Activated CD4-positive, alpha-beta memory T cell treated with anti-CD3 and anti-CD28 coated beads for 36 hours (primary cell): ENCODE measurements at regions of chr18 and their contacts with region 1.

Region 1: DNA sequence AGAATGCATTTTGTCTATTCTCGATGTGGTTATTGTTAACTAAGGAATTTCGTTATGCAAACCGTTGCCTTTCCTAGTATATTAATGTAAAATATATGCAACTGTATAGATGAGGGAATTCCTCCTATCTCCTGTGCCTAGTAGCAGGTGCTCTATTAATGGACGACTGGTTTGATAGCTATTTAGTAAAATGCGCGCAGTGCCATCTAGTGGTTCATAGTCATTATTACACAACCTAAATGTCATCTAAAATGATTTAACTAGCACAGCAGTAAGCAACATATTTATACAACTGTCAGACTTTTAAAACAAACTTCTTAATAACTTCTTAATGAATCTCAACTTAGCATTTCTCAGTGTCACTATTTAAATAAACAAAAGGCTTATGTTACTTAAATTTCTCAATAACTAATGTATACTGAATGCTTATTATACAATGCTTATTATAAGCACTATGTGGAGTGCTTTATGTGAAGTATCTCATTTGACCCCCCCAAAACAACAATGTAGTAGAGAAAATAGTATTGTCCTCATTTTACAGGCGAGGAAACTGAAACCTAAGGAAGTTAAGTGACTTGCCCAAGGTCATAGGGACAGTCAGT is 77.9 kb downstream of the DTNA start:
- DNase-seq: no peak
- H3K4me3 Mint-ChIP-seq: no peak overlapping the region
- H3K27ac Mint-ChIP-seq: no peak overlapping the region
- H3K4me1 Mint-ChIP-seq: peaks cover 6% of the 10 kb centered on the region
- H3K27me3 Mint-ChIP-seq: peaks cover 11% of the 10 kb centered on the region

Region 2: GRCh38 chr18:34122724-34123334 is 665.2 kb before region 1 on chr18:
- CTCF ChIA-PET with region 1: interaction called, 15 read pairs
- POLR2A ChIA-PET with region 1: no interaction called
- intact Hi-C with region 1: loop called (anchors 1 kb)
- DNase-seq: no peak
- H3K4me3 Mint-ChIP-seq: no peak overlapping the region
- H3K27ac Mint-ChIP-seq: no peak overlapping the region
- H3K4me1 Mint-ChIP-seq: no peaks in the 10 kb centered on the region
- H3K27me3 Mint-ChIP-seq: no peaks in the 10 kb centered on the region

Region 3: GRCh38 chr18:34718610-34719009 is 69.4 kb before region 1 on chr18:
- CTCF ChIA-PET with region 1: no interaction called
- POLR2A ChIA-PET with region 1: no interaction called
- intact Hi-C with region 1: no loop called
- DNase-seq: no peak
- H3K4me3 Mint-ChIP-seq: no peak overlapping the region
- H3K27ac Mint-ChIP-seq: no peak overlapping the region
- H3K4me1 Mint-ChIP-seq: no peaks in the 10 kb centered on the region
- H3K27me3 Mint-ChIP-seq: no peaks in the 10 kb centered on the region

Region 4: GRCh38 chr18:34729264-34729663 is 58.8 kb before region 1 on chr18:
- CTCF ChIA-PET with region 1: no interaction called
- POLR2A ChIA-PET with region 1: no interaction called
- intact Hi-C with region 1: loop called (anchors 1 kb)
- DNase-seq: no peak
- H3K4me3 Mint-ChIP-seq: no peak overlapping the region
- H3K27ac Mint-ChIP-seq: no peak overlapping the region
- H3K4me1 Mint-ChIP-seq: no peaks in the 10 kb centered on the region
- H3K27me3 Mint-ChIP-seq: no peaks in the 10 kb centered on the region

Region 5: DNA sequence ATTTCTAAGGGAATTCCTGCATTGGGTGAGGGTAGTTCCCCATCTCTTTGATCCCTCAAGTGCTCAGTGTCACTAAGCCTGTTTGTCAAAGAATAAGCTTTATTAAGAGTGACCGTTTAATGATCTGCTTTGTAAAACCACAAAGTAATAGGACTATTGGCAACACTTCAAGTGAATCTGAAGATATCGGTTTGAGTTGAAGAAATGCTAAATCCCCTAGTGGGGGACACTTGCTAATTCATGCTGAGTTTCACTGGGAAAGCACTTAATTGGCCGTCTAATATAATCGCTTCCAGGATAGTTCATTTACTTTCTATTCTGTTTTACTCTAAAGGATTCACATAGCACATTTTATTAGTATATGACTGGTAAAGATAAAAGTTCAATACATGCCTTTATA is 23.6 kb before region 1 on chr18:
- CTCF ChIA-PET with region 1: interaction called, 12 read pairs
- POLR2A ChIA-PET with region 1: no interaction called
- intact Hi-C with region 1: no loop called
- DNase-seq: no peak
- H3K4me3 Mint-ChIP-seq: no peak overlapping the region
- H3K27ac Mint-ChIP-seq: no peak overlapping the region
- H3K4me1 Mint-ChIP-seq: no peaks in the 10 kb centered on the region
- H3K27me3 Mint-ChIP-seq: peaks cover 2% of the 10 kb centered on the region